K562 (cell line): ENCODE measurements at regions of chr17 and their contacts with region 1.

Region 1: GRCh38 chr17:35119368-35120165 is at the start of gene RAD51D:
- DNase-seq: peak; percentile 86 to 92 (median 90)
- ATAC-seq: peak; percentile 95
- H3K4me3 ChIP-seq: peak within 1 kb of the TSS; percentile 79
- H3K27ac ChIP-seq: peak within 1 kb of the TSS; percentile 77
- H3K4me1 ChIP-seq: peaks cover 12 to 20% of the 10 kb centered on the region in 2 experiments; a peak in 4 of 5 replicates
- H3K27me3 ChIP-seq: peaks cover 2 to 7% of the 10 kb centered on the region in 2 experiments; a peak in 2 of 5 replicates
- CTCF ChIP-seq: peak; percentile 86 to 97 (median 92)
- EP300 ChIP-seq: no peak
- POLR2A ChIP-seq: peak; percentile 71
- RAD21 ChIP-seq: peak; percentile 95 to 96
- polyA plus RNA-seq, gene RAD51D: 2.2 to 2.5 TPM

Region 2: DNA sequence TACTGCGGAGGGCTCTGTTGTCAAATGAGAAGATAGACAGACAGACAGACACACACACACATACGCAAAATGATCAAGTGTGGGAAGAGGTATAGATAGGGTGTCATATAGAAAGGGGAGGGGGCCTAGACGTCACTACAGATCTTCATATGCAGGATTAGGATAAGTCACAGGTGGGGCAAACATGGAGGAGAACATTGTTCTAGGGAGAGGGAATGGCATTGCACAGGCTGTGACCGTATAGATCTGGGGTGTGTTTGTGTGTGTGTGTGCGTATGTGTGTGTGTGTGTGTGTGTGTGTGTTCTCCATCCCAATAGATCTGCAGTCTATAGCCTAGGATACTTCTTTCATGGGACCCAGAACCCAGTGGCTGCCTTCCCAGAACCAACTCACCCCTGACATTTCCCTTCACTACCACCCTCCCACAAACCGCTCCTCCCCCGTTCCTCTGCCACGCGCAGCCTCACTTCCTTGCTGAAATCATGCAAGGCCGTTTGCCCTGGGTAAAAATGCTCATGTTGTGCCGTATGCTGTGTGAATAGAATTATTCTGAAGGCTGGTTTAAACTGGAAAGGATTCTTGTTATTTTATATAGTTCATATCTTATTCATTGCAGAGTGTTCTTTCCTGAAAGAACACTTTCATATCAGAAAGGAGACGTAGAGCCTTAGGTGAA is 706.0 kb before region 1 on chr17:
- CTCF ChIA-PET with region 1: interaction called, 7 read pairs
- POLR2A ChIA-PET with region 1: no interaction called
- in situ Hi-C with region 1: loop called (anchors 5 kb)
- intact Hi-C with region 1: no loop called
- DNase-seq: peak; percentile 23 to 40 (median 29)
- ATAC-seq: peak; percentile 46
- H3K4me3 ChIP-seq: no peak overlapping the region
- H3K27ac ChIP-seq: peak overlapping the region; percentile 84
- H3K4me1 ChIP-seq: peaks cover 13 to 36% of the 10 kb centered on the region in 2 experiments
- H3K27me3 ChIP-seq: no peaks in the 10 kb centered on the region; a peak in 1 of 5 replicates
- CTCF ChIP-seq: no peak
- EP300 ChIP-seq: no peak
- POLR2A ChIP-seq: no peak
- RAD21 ChIP-seq: no peak

Region 3: GRCh38 chr17:34533811-34534527 is 585.6 kb before region 1 on chr17:
- CTCF ChIA-PET with region 1: no interaction called
- POLR2A ChIA-PET with region 1: no interaction called
- in situ Hi-C with region 1: loop called (anchors 10 kb)
- intact Hi-C with region 1: no loop called
- DNase-seq: no peak
- ATAC-seq: no peak
- H3K4me3 ChIP-seq: no peak overlapping the region
- H3K27ac ChIP-seq: no peak overlapping the region
- H3K4me1 ChIP-seq: no peaks in the 10 kb centered on the region
- H3K27me3 ChIP-seq: peaks cover 0 to 1% of the 10 kb centered on the region in 2 experiments; a peak in 1 of 5 replicates
- CTCF ChIP-seq: no peak
- EP300 ChIP-seq: no peak
- POLR2A ChIP-seq: no peak
- RAD21 ChIP-seq: no peak

Region 4: DNA sequence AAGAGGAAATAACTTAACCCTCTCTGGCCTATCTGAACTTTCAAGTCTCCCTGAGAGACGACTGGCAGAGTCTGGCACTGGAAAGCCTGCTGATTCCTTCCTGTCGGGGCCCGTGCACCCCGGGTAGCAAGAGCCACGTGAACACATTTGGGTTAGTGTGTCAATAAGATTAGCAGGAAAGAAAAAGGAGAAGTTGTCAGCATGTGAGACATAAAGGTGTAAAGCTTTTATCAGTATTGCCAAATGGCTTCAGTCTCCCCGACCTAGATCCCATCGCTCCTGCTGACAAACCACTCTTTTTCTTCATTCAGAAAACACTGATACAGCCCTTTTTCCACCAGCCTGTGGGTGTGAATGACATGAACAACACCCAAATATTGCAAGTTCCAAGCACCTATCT is 232.7 kb before region 1 on chr17:
- CTCF ChIA-PET with region 1: no interaction called
- POLR2A ChIA-PET with region 1: no interaction called
- in situ Hi-C with region 1: no loop called
- intact Hi-C with region 1: loop called (anchors 10 kb)
- DNase-seq: peak in 2 of 4 experiments; percentile 57 to 72
- ATAC-seq: peak; percentile 73
- H3K4me3 ChIP-seq: no peak overlapping the region
- H3K27ac ChIP-seq: no peak overlapping the region
- H3K4me1 ChIP-seq: peaks cover 21 to 31% of the 10 kb centered on the region in 2 experiments; a peak in 3 of 5 replicates
- H3K27me3 ChIP-seq: peaks cover 0 to 17% of the 10 kb centered on the region in 2 experiments; a peak in 1 of 5 replicates
- CTCF ChIP-seq: no peak
- EP300 ChIP-seq: peak; percentile 88
- POLR2A ChIP-seq: no peak
- RAD21 ChIP-seq: no peak

Region 5: DNA sequence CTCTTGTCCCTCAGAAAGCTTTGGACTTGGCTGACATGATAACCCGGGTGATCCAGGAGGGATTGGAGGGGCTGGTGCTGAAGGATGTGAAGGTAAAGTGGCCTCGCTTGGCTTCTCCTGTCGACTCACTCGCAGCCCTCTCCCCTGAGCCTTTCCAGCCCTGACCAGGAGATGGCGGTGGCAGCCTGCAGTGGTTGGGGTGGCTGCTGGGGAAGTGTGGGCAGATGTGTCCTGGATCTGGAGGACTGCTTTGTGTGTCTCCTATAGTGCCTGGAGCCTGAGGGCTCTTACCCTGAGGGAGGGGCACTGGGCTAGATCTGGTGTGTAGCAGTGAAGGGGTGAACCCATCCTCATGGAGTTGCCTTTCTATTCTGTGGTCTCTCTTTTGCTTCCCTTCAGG is 121.4 kb before region 1 on chr17:
- CTCF ChIA-PET with region 1: interaction called, 49 read pairs
- POLR2A ChIA-PET with region 1: interaction called, 6 read pairs
- in situ Hi-C with region 1: loop called (anchors 5 kb)
- intact Hi-C with region 1: loop called (anchors 1 kb)
- DNase-seq: peak; percentile 74 to 86 (median 78)
- ATAC-seq: peak; percentile 94
- H3K4me3 ChIP-seq: no peak overlapping the region
- H3K27ac ChIP-seq: no peak overlapping the region
- H3K4me1 ChIP-seq: peaks cover 3 to 11% of the 10 kb centered on the region in 2 experiments; a peak in 3 of 5 replicates
- H3K27me3 ChIP-seq: no peaks in the 10 kb centered on the region
- CTCF ChIP-seq: peak; percentile 87 to 91 (median 88)
- EP300 ChIP-seq: no peak
- POLR2A ChIP-seq: no peak
- RAD21 ChIP-seq: peak; percentile 86 to 95

Region 6: GRCh38 chr17:35046740-35047283 is 72.8 kb before region 1 on chr17:
- CTCF ChIA-PET with region 1: no interaction called
- POLR2A ChIA-PET with region 1: no interaction called
- in situ Hi-C with region 1: no loop called
- intact Hi-C with region 1: no loop called
- DNase-seq: peak in 3 of 4 experiments; percentile 14 to 83 (median 43)
- ATAC-seq: peak; percentile 74
- H3K4me3 ChIP-seq: peak overlapping the region; percentile 23; the same call in 1 of the 2 replicates
- H3K27ac ChIP-seq: peak overlapping the region; percentile 37; the same call in 1 of the 3 replicates
- H3K4me1 ChIP-seq: peaks cover 0 to 15% of the 10 kb centered on the region in 2 experiments
- H3K27me3 ChIP-seq: no peaks in the 10 kb centered on the region
- CTCF ChIP-seq: no peak
- EP300 ChIP-seq: no peak
- POLR2A ChIP-seq: no peak
- RAD21 ChIP-seq: no peak